Posterior cingulate gyrus (tissue), 11 donors: ENCODE measurements at regions of chr3 and their contacts with region 1.

Region 1: DNA sequence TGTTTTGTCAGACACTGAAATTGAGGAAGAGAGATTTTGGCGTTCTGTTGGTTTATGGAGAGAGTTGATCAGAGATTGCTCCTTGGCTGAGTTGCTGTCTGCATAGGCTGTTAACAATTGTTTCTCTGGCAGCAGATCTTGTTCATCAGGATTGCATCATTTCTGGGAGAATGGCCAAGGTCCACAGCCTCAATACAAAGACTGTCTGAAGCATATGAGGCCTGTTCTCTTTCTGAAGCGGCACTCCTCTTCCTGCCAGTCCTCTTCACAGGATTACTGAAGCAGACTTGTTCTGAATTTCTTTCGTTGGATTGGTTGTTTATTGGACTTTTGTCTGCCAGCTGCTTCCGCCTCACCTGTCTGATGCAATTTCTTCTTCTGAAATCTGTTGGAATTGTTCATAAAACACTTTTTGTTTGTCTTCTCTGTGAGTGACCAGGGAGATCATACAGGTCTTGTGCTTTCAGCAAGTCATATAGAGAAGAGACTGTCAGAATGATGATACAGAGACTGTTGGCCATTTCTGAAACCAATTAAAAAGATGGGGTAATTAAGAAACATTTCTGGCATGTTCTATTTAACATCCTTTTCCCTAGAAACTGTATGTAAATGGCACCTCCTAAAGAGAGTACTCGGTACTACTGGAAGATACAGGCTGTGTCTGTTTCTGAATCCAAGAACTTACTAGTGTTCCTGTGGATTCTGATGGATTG is 25.5 kb downstream of the SETD5 start:
- DNase-seq: peak in 7 of 10 donors; percentile 57 to 92 (median 72)

Region 2: GRCh38 chr3:9330166-9330703 is 92.6 kb before region 1 on chr3:
- intact Hi-C with region 1: no loop called
- DNase-seq: no peak

Region 3: GRCh38 chr3:9352917-9353752 is 69.7 kb before region 1 on chr3:
- intact Hi-C with region 1: loop called (anchors 5 kb)
- DNase-seq: peak; percentile 57 to 96 (median 77)

Region 4: GRCh38 chr3:9362731-9363530 is 59.9 kb before region 1 on chr3 and contains the start of gene THUMPD3:
- intact Hi-C with region 1: loop called (anchors 2 kb)
- DNase-seq: peak; percentile 92 to 99 (median 95)

Region 5: GRCh38 chr3:9396700-9397521 is 26.0 kb before region 1 on chr3:
- intact Hi-C with region 1: loop called (anchors 2 kb)
- DNase-seq: peak; percentile 97 to 100 (median 98)

Region 6: DNA sequence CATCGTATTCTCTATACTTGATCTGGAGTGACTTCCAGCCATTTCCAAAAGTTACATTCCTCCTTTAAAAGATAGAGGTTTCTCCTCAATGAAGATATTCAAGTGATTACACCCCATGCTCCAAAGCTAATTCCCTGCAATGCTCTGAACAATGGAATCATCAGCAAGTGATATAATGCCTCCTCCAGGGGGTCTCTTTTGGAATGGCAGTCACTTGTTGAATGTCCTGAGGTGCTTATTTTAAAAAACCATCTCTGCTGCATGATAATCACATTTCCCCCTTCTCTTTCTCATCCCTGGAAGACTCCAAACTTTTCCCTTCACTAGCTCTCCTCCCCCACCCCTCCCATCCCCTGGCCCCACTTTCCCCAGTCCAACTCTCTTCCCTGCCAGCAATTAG is 128.1 kb after region 1 on chr3:
- intact Hi-C with region 1: no loop called
- DNase-seq: no peak